Activated B cell treated with CpG ODN at 0.5 μM for 24 hours (primary cell): ENCODE measurements at regions of chr9 and their contacts with region 1.

Region 1: DNA sequence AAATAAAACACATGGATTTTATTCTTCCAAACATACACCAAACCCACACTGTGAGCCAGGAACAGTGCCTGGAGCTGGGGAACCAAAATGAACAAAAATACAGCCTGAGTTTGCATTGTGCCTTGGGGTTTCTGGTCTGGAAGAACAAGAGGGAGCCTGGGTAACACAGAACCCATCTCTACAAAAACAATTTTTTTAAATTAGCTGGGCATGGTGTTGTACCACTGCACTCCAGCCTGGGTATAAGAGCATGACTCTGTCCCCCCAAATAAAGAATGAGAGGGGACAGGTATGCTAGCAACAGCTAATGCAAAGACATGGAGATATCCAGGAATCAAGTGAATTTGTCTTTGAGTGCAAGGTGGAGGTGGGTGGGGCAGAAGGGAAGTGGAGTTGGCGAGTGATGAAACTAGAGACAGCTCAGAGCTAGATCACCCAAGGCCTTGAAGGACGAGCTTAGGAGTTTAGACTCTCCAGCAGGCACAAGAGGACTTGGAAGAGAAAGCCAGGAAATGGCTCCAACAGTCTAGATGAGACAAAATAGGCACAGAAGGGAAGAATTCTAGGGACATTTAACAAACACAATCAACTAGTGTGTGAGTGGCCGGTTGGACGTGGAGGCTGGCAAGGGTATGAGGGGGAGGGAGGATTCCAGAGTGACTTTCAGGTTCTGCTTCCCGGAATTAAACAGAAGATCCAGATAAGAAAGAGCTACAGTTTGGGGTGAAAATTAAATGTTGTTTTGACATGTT is 47.4 kb downstream of the FNBP1 start:
- DNase-seq: no peak
- ATAC-seq: no peak
- H3K4me3 Mint-ChIP-seq: peak overlapping the region; percentile 61
- H3K27ac Mint-ChIP-seq: peak overlapping the region; percentile 93
- H3K4me1 Mint-ChIP-seq: peaks cover 88% of the 10 kb centered on the region
- H3K27me3 Mint-ChIP-seq: no peaks in the 10 kb centered on the region
- CTCF ChIP-seq: no peak

Region 2: DNA sequence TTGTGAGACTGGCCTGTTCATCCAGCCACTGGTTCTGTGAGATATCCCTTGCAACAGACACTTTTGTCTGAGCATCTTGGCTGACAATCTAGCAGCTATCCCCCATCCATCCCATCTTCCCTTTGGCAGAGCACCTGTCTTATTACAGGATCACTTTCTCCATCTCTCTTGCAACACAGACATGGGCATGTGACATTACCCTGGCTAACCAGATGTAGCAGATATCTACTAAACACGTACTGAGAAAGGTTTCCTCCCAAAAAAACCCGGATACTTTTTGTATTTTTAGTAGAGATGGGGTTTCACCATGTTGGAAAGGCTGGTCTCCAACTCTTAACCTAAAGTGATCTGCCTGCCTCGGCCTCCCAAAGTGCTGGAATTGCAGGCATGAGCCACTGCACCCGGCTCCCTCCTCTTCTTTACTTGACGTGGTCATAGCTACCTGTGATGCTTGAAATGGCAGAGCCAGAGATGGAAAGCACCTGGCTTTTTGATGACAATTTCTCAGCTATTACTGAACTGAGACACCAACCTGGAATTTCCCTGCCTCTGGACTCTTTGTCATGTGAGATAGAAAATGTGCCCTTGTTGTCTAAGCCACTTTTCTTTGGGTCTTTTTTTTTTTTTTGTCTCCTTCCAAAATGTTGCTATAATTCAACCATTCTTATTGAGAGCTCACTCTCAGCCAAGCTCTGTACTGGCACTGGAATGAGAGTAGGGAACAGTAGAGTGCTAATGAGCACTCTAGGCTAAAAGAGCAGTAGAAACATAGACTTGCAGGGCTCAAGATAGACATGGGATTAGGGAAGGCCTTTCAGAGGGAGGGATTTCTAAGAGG is 14.8 kb after region 1 on chr9:
- CTCF ChIA-PET with region 1: interaction called, 4 read pairs
- POLR2A ChIA-PET with region 1: interaction called, 455 read pairs
- intact Hi-C with region 1: loop called (anchors 1 kb)
- DNase-seq: no peak
- ATAC-seq: peak; percentile 71
- H3K4me3 Mint-ChIP-seq: peak overlapping the region; percentile 58
- H3K27ac Mint-ChIP-seq: peak overlapping the region; percentile 97
- H3K4me1 Mint-ChIP-seq: peaks cover 92% of the 10 kb centered on the region
- H3K27me3 Mint-ChIP-seq: no peaks in the 10 kb centered on the region
- CTCF ChIP-seq: no peak